ENCODE measurements at regions of chr17 and their contacts with region 1.

Region 1: GRCh38 chr17:2929881-2930533 is 133.4 kb downstream of the OR1D5 start:
- DNase-seq: peak; percentile 60
- H3K4me3 Mint-ChIP-seq: no peak overlapping the region
- H3K27ac Mint-ChIP-seq: peak overlapping the region; percentile 28
- H3K4me1 Mint-ChIP-seq: peaks cover 14% of the 10 kb centered on the region
- H3K27me3 Mint-ChIP-seq: no peaks in the 10 kb centered on the region
- CTCF ChIP-seq: peak; percentile 83

Region 2: DNA sequence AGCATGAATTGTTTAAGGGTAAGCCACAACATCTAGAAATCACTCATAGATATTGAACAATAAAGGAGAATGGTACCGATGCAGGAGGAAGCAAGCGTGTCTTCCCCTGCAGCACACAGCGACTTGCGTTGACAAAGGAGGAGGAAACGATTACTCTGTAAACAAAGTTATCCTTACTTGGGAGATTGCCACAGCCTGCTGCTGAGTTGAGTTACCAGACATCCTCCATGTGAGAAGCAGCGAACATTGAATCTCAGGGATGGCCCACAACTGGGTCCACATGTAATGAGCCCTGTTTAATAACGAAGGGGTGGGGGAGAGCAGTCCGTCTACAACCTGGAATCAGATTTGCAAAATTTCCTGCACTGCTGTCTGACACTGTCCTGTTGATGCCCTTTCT is 246.1 kb before region 1 on chr17:
- CTCF ChIA-PET with region 1: no interaction called
- POLR2A ChIA-PET with region 1: no interaction called
- intact Hi-C with region 1: no loop called
- DNase-seq: no peak
- H3K4me3 Mint-ChIP-seq: no peak overlapping the region
- H3K27ac Mint-ChIP-seq: no peak overlapping the region
- H3K4me1 Mint-ChIP-seq: no peaks in the 10 kb centered on the region
- H3K27me3 Mint-ChIP-seq: no peaks in the 10 kb centered on the region
- CTCF ChIP-seq: no peak

Region 3: GRCh38 chr17:2828397-2829038 is 101.5 kb before region 1 on chr17:
- CTCF ChIA-PET with region 1: interaction called, 4 read pairs
- POLR2A ChIA-PET with region 1: no interaction called
- intact Hi-C with region 1: loop called (anchors 1 kb)
- DNase-seq: peak; percentile 69
- H3K4me3 Mint-ChIP-seq: no peak overlapping the region
- H3K27ac Mint-ChIP-seq: no peak overlapping the region
- H3K4me1 Mint-ChIP-seq: no peaks in the 10 kb centered on the region
- H3K27me3 Mint-ChIP-seq: no peaks in the 10 kb centered on the region
- CTCF ChIP-seq: peak; percentile 97

Region 4: GRCh38 chr17:2853111-2853721 is 76.8 kb before region 1 on chr17:
- CTCF ChIA-PET with region 1: interaction called, 101 read pairs
- POLR2A ChIA-PET with region 1: interaction called, 23 read pairs
- intact Hi-C with region 1: loop called (anchors 1 kb)
- DNase-seq: peak; percentile 15
- H3K4me3 Mint-ChIP-seq: peak overlapping the region; percentile 78
- H3K27ac Mint-ChIP-seq: no peak overlapping the region
- H3K4me1 Mint-ChIP-seq: peaks cover 15% of the 10 kb centered on the region
- H3K27me3 Mint-ChIP-seq: no peaks in the 10 kb centered on the region
- CTCF ChIP-seq: no peak

Region 5: GRCh38 chr17:2892305-2892971 is 37.6 kb before region 1 on chr17:
- CTCF ChIA-PET with region 1: interaction called, 5 read pairs
- POLR2A ChIA-PET with region 1: interaction called, 30 read pairs
- intact Hi-C with region 1: loop called (anchors 2 kb)
- DNase-seq: peak; percentile 98
- H3K4me3 Mint-ChIP-seq: no peak overlapping the region
- H3K27ac Mint-ChIP-seq: peak overlapping the region; percentile 21
- H3K4me1 Mint-ChIP-seq: peaks cover 32% of the 10 kb centered on the region
- H3K27me3 Mint-ChIP-seq: no peaks in the 10 kb centered on the region
- CTCF ChIP-seq: no peak

Region 6: GRCh38 chr17:2949469-2950044 is 19.6 kb after region 1 on chr17:
- CTCF ChIA-PET with region 1: interaction called, 6 read pairs
- POLR2A ChIA-PET with region 1: interaction called, 11 read pairs
- intact Hi-C with region 1: loop called (anchors 1 kb)
- DNase-seq: peak; percentile 92
- H3K4me3 Mint-ChIP-seq: no peak overlapping the region
- H3K27ac Mint-ChIP-seq: peak overlapping the region; percentile 23
- H3K4me1 Mint-ChIP-seq: peaks cover 17% of the 10 kb centered on the region
- H3K27me3 Mint-ChIP-seq: no peaks in the 10 kb centered on the region
- CTCF ChIP-seq: no peak

Region 7: DNA sequence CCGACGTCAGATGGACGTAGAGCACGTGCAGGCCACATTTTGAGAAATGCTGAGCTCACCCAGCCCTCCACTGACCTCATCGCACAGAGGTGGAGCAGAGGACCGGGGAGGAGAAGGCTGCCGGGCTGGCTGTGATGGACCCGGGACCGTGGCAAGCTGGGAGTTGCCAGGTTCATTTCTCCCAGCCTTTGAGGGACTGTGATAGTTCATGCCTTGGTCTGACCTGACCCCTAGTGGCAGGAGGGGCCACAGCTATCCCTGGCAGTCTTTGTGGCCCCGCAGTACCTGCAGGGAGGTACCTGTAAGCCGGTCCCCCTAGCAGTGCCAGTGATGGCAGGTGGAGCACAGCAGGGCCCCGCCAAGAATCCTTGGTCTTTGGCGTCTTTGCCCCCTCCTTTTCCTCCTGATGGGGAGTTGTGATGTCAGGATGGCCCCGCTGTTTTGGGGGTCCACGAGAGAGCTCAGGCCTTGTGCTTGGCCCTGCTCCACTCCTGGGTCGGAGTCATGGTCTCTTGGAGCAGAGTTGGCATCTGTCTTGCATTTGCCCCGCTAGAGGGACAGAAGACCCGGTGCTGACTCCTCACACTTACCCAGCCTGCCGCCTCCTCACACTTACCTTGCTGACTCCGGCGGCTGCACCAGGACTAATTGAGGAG is 83.0 kb after region 1 on chr17:
- CTCF ChIA-PET with region 1: interaction called, 11 read pairs
- POLR2A ChIA-PET with region 1: no interaction called
- intact Hi-C with region 1: no loop called
- DNase-seq: peak; percentile 69
- H3K4me3 Mint-ChIP-seq: no peak overlapping the region
- H3K27ac Mint-ChIP-seq: no peak overlapping the region
- H3K4me1 Mint-ChIP-seq: no peaks in the 10 kb centered on the region
- H3K27me3 Mint-ChIP-seq: no peaks in the 10 kb centered on the region
- CTCF ChIP-seq: peak; percentile 66

Region 8: DNA sequence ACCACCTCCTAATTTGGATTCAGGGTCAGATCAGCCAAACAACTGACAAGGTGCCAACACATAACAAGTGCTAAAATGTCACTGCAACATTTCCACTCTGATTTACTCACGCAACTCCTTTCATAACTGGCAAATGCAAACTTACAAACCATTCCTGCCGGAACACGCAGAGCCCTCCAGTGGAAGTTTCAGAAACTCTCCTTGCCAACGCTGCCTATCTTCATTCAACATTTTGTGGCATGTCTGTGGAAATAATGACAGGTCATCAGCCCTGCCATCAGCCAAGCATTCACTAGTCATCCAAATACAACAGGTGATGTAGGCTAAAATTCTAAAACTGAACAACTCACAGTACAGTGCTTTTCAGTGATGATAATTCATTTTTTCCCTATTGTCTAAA is 405.9 kb after region 1 on chr17:
- CTCF ChIA-PET with region 1: no interaction called
- POLR2A ChIA-PET with region 1: no interaction called
- intact Hi-C with region 1: no loop called
- DNase-seq: peak; percentile 18
- H3K4me3 Mint-ChIP-seq: no peak overlapping the region
- H3K27ac Mint-ChIP-seq: no peak overlapping the region
- H3K4me1 Mint-ChIP-seq: no peaks in the 10 kb centered on the region
- H3K27me3 Mint-ChIP-seq: peaks cover 11% of the 10 kb centered on the region
- CTCF ChIP-seq: peak; percentile 9

Measured in MCF 10A (cell line).